H1 (cell line): ENCODE measurements at regions of chr9 and their contacts with region 1.

Region 1: DNA sequence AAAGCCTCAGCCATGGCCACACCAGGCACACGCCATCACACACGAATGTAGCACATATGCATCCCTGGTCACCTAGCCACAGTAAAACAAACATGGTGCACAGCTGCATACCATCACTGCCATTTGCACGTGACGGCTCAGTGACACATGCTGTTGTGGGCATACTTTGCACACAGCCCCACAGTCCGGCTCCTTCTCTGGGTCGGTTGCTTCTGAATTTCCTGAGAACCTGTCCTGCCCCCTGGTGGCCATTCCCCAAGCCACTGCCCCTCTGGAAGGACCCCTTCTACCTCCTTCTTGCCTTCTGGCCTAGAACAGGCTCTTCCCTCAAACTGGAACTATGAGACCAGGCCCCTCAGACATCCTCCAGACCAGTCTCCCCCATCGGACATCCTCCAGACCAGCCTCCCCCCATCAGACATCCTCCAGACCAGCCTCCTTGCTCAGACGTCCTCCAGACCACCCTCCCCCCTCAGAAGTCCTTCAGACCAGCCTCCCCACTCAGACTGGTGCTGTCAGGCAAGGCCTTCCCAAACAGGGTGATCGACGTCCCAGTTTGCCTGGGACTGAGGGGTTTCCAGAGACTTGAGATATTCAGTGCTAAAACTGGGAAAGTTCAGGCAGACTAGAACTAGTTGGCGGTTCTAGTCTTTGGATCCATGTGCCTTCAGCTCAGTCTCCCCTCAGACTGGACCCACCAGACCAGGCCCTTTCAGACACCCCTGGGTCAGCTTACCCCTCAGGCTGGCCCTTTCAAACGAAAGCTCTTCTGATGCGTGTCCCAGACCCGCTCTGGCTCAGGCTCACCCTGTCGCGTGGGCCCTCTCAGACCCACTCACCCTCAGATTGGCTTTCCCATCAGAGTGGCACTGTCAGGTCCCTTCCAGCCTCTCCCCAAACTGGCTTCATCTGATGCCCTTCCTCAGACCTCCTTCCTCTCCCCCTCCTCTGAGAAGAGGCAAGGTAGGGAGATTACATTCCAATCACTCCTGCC is 24.3 kb upstream of the ENHO start:
- DNase-seq: peak; percentile 47 to 93
- H3K4me3 ChIP-seq: no peak overlapping the region
- H3K27ac ChIP-seq: no peak overlapping the region
- H3K4me1 ChIP-seq: peaks cover 0 to 2% (median 0%) of the 10 kb centered on the region in 4 experiments; a peak in 1 of 7 replicates
- H3K27me3 ChIP-seq: peaks cover 0 to 10% (median 4%) of the 10 kb centered on the region in 4 experiments; a peak in 5 of 7 replicates
- CTCF ChIP-seq: peak; percentile 77 to 93 (median 87)
- EP300 ChIP-seq: no peak
- POLR2A ChIP-seq: no peak
- RAD21 ChIP-seq: peak; percentile 84 to 88

Region 2: GRCh38 chr9:34437006-34437925 is 109.9 kb before region 1 on chr9:
- CTCF ChIA-PET with region 1: interaction called, 39 read pairs
- POLR2A ChIA-PET with region 1: no interaction called
- DNase-seq: peak; percentile 47 to 73
- H3K4me3 ChIP-seq: no peak overlapping the region
- H3K27ac ChIP-seq: no peak overlapping the region
- H3K4me1 ChIP-seq: no peaks in the 10 kb centered on the region
- H3K27me3 ChIP-seq: no peaks in the 10 kb centered on the region
- CTCF ChIP-seq: peak in 2 of 3 experiments; percentile 91 to 94; a peak in 3 of 4 replicates
- EP300 ChIP-seq: no peak
- POLR2A ChIP-seq: no peak
- RAD21 ChIP-seq: peak; percentile 95 to 99

Region 3: DNA sequence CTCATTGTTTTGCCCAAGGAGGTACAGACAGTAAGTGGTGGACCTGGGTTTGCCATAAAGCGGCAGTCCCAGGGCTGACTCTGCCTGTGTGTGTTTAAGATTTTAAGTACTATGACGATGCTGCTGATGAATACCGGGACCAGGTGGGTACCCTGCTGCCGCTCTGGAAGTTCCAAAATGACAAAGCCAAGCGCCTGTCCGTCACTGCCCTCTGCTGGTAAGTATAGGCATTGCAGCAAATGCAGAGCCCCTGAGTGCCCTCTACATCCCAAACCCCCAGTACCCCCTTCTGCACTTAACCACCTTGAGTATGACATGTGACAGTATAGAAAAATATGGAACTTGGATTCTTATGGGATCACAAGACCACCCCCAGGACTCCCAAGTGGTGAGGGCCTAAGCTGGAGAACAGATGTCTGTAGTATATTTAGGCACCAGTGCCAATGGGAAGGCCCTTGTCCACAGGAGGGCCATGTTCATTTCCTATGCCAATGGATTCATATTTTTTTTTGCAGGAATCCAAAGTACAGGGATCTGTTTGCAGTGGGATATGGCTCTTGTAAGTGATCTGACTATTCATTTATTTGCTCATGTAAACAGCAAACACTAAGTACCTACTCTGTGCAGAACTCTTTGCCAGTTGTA is 46.4 kb before region 1 on chr9:
- CTCF ChIA-PET with region 1: interaction called, 61 read pairs
- POLR2A ChIA-PET with region 1: no interaction called
- DNase-seq: peak in 1 of 2 experiments; percentile 91
- H3K4me3 ChIP-seq: no peak overlapping the region
- H3K27ac ChIP-seq: no peak overlapping the region
- H3K4me1 ChIP-seq: 0 out of 7 replicates have a peak, but pooled peaks cover 0 to 3% (median 0%) of the 10 kb centered on the region in 4 experiments
- H3K27me3 ChIP-seq: no peaks in the 10 kb centered on the region; a peak in 1 of 7 replicates
- CTCF ChIP-seq: peak; percentile 90 to 97 (median 96)
- EP300 ChIP-seq: no peak
- POLR2A ChIP-seq: no peak
- RAD21 ChIP-seq: peak; percentile 92 to 93

Region 4: DNA sequence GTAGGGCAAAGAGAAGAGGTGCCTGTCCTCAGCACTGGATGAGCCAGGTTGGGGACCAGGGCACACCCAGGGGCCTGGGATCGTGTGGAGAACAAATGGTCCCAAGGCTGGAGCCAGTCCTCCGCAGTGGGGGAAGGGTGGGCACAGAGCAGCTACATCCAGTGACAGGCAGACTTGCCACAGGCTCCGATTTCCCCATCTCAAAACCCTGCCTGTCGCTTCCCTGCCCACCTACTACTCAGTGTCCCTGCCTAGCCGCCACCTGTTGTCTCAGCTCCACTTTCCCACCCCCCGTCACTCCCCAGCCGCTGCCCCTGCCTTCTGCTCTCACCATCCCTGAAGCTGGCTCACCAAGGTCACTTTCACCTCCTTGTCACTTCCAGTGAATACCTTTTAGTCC is 10.4 kb before region 1 on chr9:
- CTCF ChIA-PET with region 1: interaction called, 14 read pairs
- POLR2A ChIA-PET with region 1: no interaction called
- DNase-seq: no peak
- H3K4me3 ChIP-seq: no peak overlapping the region
- H3K27ac ChIP-seq: no peak overlapping the region
- H3K4me1 ChIP-seq: 0 out of 7 replicates have a peak, but pooled peaks cover 0 to 3% (median 0%) of the 10 kb centered on the region in 4 experiments
- H3K27me3 ChIP-seq: no peaks in the 10 kb centered on the region; a peak in 2 of 7 replicates
- CTCF ChIP-seq: no peak
- EP300 ChIP-seq: no peak
- POLR2A ChIP-seq: no peak
- RAD21 ChIP-seq: no peak

Region 5: DNA sequence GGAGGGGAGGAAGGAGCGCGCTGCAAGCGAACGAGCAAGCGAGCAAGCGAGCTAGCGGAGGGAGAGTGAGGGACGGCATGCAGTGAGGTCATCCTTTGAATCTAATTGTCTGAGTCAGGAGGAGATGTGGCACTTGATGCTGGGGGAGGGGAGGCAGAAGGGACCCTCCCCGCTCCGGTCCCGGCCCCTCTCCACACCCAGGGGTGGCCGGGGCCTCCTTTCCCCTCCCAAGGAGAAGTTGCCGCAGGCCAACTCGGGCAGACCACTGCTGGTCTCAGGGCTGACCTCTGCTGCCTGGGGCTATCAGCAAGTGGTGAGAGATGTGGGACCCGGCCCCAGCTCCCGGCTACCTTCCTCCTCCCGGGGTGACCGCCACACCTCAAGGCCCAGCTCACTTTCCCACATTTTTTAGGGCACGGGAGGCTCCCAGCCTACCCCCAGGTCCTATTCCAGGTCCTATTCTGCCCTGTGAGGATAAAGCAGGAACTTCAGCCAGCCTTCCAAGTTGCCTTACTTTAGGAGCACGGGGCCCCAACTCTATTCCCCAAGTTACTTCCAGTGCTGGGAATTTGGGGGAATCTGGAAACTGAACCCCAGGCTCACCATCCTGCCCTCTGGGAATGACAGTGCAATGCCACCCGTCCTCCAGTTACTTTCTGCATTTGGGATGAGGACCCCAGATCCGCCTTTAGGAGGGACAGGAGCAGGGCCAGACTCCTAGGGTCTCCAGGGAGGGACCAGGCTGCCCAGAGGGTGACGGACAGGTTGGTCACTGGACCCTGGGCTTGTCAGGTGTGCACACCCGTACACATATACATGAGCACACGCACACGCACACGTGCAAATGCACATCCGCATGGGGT is 31.3 kb after region 1 on chr9:
- CTCF ChIA-PET with region 1: interaction called, 29 read pairs
- POLR2A ChIA-PET with region 1: no interaction called
- DNase-seq: peak in 1 of 2 experiments; percentile 74
- H3K4me3 ChIP-seq: peak overlapping the region; percentile 24 to 55 (median 44)
- H3K27ac ChIP-seq: no peak overlapping the region
- H3K4me1 ChIP-seq: peaks cover 12 to 45% (median 30%) of the 10 kb centered on the region in 4 experiments
- H3K27me3 ChIP-seq: peaks cover 21 to 81% (median 65%) of the 10 kb centered on the region in 4 experiments
- CTCF ChIP-seq: peak in 1 of 3 experiments; percentile 6; a peak in 1 of 4 replicates
- EP300 ChIP-seq: no peak
- POLR2A ChIP-seq: no peak
- RAD21 ChIP-seq: no peak

Region 6: GRCh38 chr9:34664281-34665066 is 117.3 kb after region 1 on chr9:
- CTCF ChIA-PET with region 1: no interaction called
- POLR2A ChIA-PET with region 1: no interaction called
- DNase-seq: peak; percentile 85 to 94
- H3K4me3 ChIP-seq: peak overlapping the region; percentile 59 to 81 (median 78)
- H3K27ac ChIP-seq: no peak overlapping the region
- H3K4me1 ChIP-seq: peaks cover 0 to 4% (median 2%) of the 10 kb centered on the region in 4 experiments; a peak in 2 of 7 replicates
- H3K27me3 ChIP-seq: peaks cover 0 to 5% (median 0%) of the 10 kb centered on the region in 4 experiments; a peak in 2 of 7 replicates
- CTCF ChIP-seq: peak; percentile 99 to 100 (median 100)
- EP300 ChIP-seq: no peak
- POLR2A ChIP-seq: no peak
- RAD21 ChIP-seq: peak; percentile 52 to 72

Region 7: GRCh38 chr9:34675048-34675714 is 128.1 kb after region 1 on chr9:
- CTCF ChIA-PET with region 1: no interaction called
- POLR2A ChIA-PET with region 1: no interaction called
- DNase-seq: peak in 1 of 2 experiments; percentile 92
- H3K4me3 ChIP-seq: no peak overlapping the region
- H3K27ac ChIP-seq: no peak overlapping the region
- H3K4me1 ChIP-seq: 0 out of 7 replicates have a peak, but pooled peaks cover 0 to 2% (median under 1%) of the 10 kb centered on the region in 4 experiments
- H3K27me3 ChIP-seq: no peaks in the 10 kb centered on the region
- CTCF ChIP-seq: peak; percentile 92 to 100 (median 99)
- EP300 ChIP-seq: peak in 1 of 2 experiments; percentile 48; a peak in 1 of 3 replicates
- POLR2A ChIP-seq: no peak
- RAD21 ChIP-seq: peak; percentile 92 to 93